ENCODE measurements at regions of chr19 and their contacts with region 1.

Region 1: GRCh38 chr19:36876993-36877938 is 26.6 kb downstream of the ZNF345 start:
- DNase-seq: no peak
- ATAC-seq: no peak

Region 2: DNA sequence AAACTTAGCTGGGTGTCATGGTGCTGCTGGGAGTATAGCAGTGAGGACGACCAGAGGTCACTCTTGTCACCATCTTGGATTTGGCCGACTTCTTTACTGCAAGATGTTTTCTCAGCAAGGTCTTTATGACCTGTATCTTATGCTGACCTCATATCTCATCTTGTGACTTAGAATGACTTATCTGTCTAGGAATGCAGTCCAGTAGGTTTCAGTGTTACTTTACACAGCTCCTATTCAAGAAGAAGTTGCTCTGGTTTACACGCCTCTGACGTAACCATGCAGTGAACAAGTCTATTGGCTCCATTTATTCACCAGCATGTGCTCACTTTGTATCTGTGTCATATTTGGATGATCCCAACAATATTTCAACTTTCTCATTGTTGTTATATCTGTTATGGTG is 131.4 kb before region 1 on chr19:
- intact Hi-C with region 1: loop called (anchors 10 kb)
- DNase-seq: no peak
- ATAC-seq: no peak

Region 3: GRCh38 chr19:36850559-36851442 is 26.5 kb before region 1 on chr19 and contains the start of gene ZNF345:
- intact Hi-C with region 1: no loop called
- DNase-seq: peak; percentile 94
- ATAC-seq: peak; percentile 97
- total RNA-seq, gene ZNF345: 3.1 TPM

Measured in Right ventricle myocardium inferior (tissue), 1 donor.